Dendritic cell treated with granulocyte-macrophage colony-stimulating factor and Interleukin-4, amounts not matched to agents 40 ng/mL and 50 ng/mL, for 4 days (primary cell): ENCODE measurements at regions of chr20 and their contacts with region 1.

Region 1: DNA sequence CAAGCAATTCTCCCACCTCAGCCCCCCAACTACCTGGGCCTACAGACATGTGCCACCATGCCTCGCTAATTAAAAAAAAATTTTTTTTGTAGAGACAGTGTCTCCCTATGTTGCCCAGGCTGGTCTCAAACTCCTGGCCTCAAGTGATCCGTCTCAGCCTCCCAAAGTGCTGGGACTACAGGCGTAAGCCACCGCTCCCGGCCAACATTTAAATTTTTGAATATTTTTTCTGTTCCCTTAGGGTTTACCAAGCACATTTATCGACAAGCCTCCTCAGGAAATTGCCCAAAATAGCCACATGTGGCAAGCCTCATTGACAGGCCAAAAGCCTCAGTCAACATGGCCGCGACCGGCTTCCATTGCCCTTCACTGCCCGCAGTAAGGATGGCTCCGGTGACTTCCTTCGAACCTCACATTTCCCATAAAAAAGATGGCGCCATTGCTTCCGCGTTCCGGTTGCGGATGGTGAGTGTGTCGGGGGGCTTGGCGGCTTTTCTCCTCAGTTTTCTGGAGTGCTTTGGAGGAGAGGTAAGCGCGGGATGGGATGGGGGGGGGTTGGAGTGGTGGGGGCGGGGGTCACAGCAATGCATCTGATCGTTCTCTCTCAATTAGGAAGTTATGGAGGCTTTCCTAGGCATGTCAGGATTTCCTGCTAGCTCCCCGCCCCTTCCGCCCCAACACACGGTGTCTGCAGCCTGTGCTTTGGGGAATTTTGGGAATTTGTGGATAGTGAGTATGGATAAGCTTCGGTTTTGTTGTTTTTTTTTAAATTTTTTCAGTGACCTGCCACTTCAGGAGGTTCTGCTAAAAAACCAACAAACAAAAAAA is at the start of gene SHLD1:
- H3K4me3 Mint-ChIP-seq: peak within 1 kb of the TSS; percentile 73
- H3K27ac Mint-ChIP-seq: peak within 1 kb of the TSS; percentile 86
- H3K4me1 Mint-ChIP-seq: peaks cover 14% of the 10 kb centered on the region
- H3K27me3 Mint-ChIP-seq: peaks cover 1% of the 10 kb centered on the region

Region 2: DNA sequence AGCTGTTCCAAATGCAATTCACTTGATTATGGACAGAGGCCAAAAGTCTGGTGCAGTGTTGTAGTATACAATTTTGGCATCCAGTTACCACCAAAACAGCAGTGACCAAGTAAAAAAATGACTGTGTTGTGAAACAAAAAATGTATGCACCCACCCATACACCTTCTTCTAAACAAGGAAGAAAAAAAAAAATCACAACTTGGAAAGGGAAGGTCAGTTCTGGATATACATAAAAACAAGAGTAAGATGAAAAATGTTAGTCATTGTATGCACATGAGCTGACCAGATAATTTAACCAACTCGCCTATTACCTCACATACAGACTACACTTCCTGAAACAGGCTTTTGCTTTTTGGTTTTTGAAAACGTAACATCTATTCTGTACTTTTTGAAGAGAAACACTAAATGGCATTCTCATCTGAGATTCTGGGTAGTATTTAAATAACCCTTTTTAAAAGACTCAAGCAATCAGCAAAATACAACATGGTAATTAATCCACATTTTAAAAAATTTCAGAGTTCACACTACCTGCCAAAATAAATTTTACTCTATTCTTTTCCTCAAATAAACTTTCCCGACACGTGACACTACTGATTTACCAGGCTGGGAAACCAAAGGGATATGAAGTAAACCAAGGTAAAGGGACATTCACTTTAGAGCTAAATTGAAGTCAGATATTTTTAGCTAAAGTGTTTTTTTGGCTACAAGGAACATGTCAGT is 141.6 kb before region 1 on chr20:
- intact Hi-C with region 1: loop called (anchors 5 kb)
- H3K4me3 Mint-ChIP-seq: peak overlapping the region; percentile 89
- H3K27ac Mint-ChIP-seq: peak overlapping the region; percentile 98
- H3K4me1 Mint-ChIP-seq: peaks cover 57% of the 10 kb centered on the region
- H3K27me3 Mint-ChIP-seq: no peaks in the 10 kb centered on the region

Region 3: DNA sequence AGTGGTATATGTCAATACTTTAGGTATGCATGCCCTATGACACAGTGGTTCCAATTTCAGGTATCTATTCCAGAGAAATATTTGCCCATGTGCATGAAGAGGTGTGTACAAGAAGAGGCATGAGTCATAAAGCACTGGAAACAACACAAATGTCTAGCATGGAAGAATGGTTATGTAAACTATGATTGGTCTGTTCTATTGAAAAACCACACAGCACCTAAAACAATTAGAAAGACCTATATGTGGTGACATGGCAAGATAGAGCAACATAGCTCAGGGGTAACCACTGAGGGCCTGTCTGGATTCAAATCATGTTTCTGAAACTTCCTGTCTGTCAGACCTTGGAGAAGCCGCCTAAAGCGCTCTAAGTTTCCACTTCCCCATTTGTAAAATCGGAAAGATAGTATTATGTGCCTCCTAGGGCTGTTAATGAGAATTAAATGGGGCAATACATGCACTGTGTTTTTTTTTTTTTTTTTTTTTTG is 75.9 kb before region 1 on chr20:
- intact Hi-C with region 1: loop called (anchors 5 kb)
- H3K4me3 Mint-ChIP-seq: no peak overlapping the region
- H3K27ac Mint-ChIP-seq: peak overlapping the region; percentile 70
- H3K4me1 Mint-ChIP-seq: peaks cover 35% of the 10 kb centered on the region
- H3K27me3 Mint-ChIP-seq: no peaks in the 10 kb centered on the region

Region 4: GRCh38 chr20:5691918-5692618 is 58.1 kb before region 1 on chr20:
- intact Hi-C with region 1: no loop called
- H3K4me3 Mint-ChIP-seq: no peak overlapping the region
- H3K27ac Mint-ChIP-seq: no peak overlapping the region
- H3K4me1 Mint-ChIP-seq: peaks cover 28% of the 10 kb centered on the region
- H3K27me3 Mint-ChIP-seq: no peaks in the 10 kb centered on the region

Region 5: GRCh38 chr20:5797843-5798462 is 47.8 kb after region 1 on chr20:
- intact Hi-C with region 1: no loop called
- H3K4me3 Mint-ChIP-seq: no peak overlapping the region
- H3K27ac Mint-ChIP-seq: peak overlapping the region; percentile 89
- H3K4me1 Mint-ChIP-seq: peaks cover 29% of the 10 kb centered on the region
- H3K27me3 Mint-ChIP-seq: no peaks in the 10 kb centered on the region